Astrocyte of the cerebellum (primary cell): ENCODE measurements at regions of chr18 and their contacts with region 1.

Region 1: GRCh38 chr18:53509886-53510285 is 714.6 kb downstream of the MBD2 start:
- DNase-seq: no peak
- H3K4me3 ChIP-seq: no peak overlapping the region
- CTCF ChIP-seq: no peak

Region 2: DNA sequence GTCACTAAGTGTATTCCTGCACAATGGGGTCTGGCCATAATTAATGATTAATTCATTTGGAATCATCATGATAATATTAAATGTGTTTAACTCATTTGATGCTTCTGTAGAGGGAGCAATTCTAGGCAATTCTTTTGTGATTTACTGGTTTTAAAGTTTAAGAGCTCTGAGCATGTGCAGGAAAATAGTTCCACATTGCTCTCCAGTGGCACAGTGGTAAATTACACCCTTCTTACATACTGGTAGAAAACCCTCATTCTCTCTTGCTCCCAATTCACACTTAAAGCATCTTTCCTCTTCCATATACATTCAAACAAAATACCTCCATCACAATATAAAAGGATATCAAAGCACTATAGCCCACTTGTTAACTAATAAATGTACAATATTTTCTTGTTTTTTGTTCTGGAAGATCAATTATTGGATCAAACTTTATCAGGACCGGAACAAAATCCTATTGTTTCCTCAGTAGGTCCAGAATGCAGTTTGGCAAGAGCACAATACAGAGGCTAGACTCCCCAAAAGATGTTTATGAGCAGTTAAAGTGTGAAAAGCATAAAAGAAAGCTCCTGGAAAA is 129.7 kb before region 1 on chr18:
- in situ Hi-C with region 1: no loop called
- DNase-seq: peak; percentile 46
- H3K4me3 ChIP-seq: no peak overlapping the region
- CTCF ChIP-seq: peak; percentile 58

Region 3: GRCh38 chr18:53458944-53459580 is 50.8 kb before region 1 on chr18:
- in situ Hi-C with region 1: loop called (anchors 5 kb)
- DNase-seq: peak; percentile 79
- H3K4me3 ChIP-seq: no peak overlapping the region
- CTCF ChIP-seq: no peak